ENCODE measurements at regions of chr15 and their contacts with region 1.

Region 1: GRCh38 chr15:60128000-60128376 is 123.9 kb downstream of the FOXB1 start:
- DNase-seq: peak in 1 of 2 experiments; percentile 63
- H3K4me3 ChIP-seq: peak overlapping the region; percentile 53
- H3K27ac ChIP-seq: peak overlapping the region; percentile 90
- H3K4me1 ChIP-seq: peaks cover 23% of the 10 kb centered on the region
- H3K27me3 ChIP-seq: no peaks in the 10 kb centered on the region
- CTCF ChIP-seq: no peak

Region 2: DNA sequence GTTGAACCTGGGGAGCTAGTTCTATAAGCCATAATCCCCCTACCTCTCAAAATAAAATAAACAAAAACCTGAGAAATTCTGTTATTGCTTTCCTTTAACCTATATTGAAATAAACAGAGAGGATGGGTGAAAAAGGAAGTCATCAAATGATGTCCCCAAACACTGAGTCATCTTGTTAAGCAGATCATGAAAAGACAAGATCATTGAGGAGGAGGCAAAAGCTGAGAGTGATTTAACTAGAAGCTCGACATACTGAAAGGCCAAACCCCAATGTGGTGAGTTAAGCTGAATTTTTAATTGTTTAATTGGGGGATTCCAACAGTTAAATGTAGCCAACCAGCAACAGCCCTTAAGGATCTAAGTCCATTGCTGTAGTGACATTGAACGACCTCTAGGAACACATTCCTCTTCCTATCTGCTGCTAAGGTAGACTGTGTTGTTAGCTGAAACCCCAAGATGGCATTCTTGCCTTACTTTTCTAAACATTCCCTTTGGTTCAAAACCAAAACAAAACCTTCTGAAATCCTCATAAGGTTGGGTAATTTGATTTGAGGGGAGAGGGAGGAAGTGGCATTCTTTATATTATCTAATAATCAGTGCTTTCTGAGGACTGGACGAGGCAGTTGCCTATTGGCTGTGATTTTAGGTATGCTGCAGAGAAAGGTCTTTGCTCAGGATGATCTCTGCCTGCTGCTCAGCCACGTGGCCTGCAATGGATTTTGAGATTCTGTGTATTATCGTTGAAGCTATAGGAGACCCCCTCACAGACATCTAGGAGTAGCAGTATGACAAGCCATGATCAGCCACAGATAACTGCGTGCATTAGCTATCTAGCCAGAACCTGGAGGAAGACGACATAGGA is 376.2 kb before region 1 on chr15:
- CTCF ChIA-PET with region 1: no interaction called
- POLR2A ChIA-PET with region 1: no interaction called
- intact Hi-C with region 1: loop called (anchors 1 kb)
- DNase-seq: peak; percentile 8 to 68
- H3K4me3 ChIP-seq: no peak overlapping the region
- H3K27ac ChIP-seq: no peak overlapping the region
- H3K4me1 ChIP-seq: no peaks in the 10 kb centered on the region
- H3K27me3 ChIP-seq: no peaks in the 10 kb centered on the region
- CTCF ChIP-seq: peak; percentile 62

Region 3: GRCh38 chr15:59917504-59918157 is 210.4 kb before region 1 on chr15:
- CTCF ChIA-PET with region 1: no interaction called
- POLR2A ChIA-PET with region 1: no interaction called
- intact Hi-C with region 1: loop called (anchors 1 kb)
- DNase-seq: peak; percentile 48 to 78
- H3K4me3 ChIP-seq: no peak overlapping the region
- H3K27ac ChIP-seq: no peak overlapping the region
- H3K4me1 ChIP-seq: peaks cover 19% of the 10 kb centered on the region
- H3K27me3 ChIP-seq: no peaks in the 10 kb centered on the region
- CTCF ChIP-seq: peak; percentile 65

Region 4: DNA sequence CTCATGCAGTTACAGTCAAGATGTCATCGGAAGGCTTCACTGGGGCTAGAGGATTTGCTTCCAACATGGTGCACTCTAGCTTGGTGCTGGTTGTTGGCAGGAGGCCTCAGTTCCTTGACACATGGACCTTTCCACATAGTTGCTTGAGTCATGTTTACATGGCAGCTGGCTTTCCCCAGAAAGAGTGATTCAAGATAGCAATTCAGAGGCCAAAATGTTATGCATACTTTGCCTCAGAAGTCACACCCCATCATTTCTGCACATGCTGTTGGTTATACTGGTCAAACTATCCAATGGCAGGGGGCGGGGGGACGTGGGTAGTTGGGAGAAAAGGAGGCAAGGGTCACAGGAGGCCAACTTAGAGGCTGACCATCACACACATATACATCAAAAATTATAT is 65.2 kb before region 1 on chr15:
- CTCF ChIA-PET with region 1: interaction called, 10 read pairs
- POLR2A ChIA-PET with region 1: no interaction called
- intact Hi-C with region 1: no loop called
- DNase-seq: no peak
- H3K4me3 ChIP-seq: no peak overlapping the region
- H3K27ac ChIP-seq: no peak overlapping the region
- H3K4me1 ChIP-seq: no peaks in the 10 kb centered on the region
- H3K27me3 ChIP-seq: no peaks in the 10 kb centered on the region
- CTCF ChIP-seq: no peak

Region 5: GRCh38 chr15:60091165-60091564 is 36.8 kb before region 1 on chr15:
- CTCF ChIA-PET with region 1: no interaction called
- POLR2A ChIA-PET with region 1: no interaction called
- intact Hi-C with region 1: loop called (anchors 1 kb)
- DNase-seq: peak; percentile 87 to 98
- H3K4me3 ChIP-seq: no peak overlapping the region
- H3K27ac ChIP-seq: peak overlapping the region; percentile 96
- H3K4me1 ChIP-seq: peaks cover 69% of the 10 kb centered on the region
- H3K27me3 ChIP-seq: no peaks in the 10 kb centered on the region
- CTCF ChIP-seq: no peak

Region 6: GRCh38 chr15:60237421-60237820 is 109.4 kb after region 1 on chr15:
- CTCF ChIA-PET with region 1: no interaction called
- POLR2A ChIA-PET with region 1: no interaction called
- intact Hi-C with region 1: no loop called
- DNase-seq: no peak
- H3K4me3 ChIP-seq: no peak overlapping the region
- H3K27ac ChIP-seq: no peak overlapping the region
- H3K4me1 ChIP-seq: no peaks in the 10 kb centered on the region
- H3K27me3 ChIP-seq: no peaks in the 10 kb centered on the region
- CTCF ChIP-seq: no peak

Region 7: GRCh38 chr15:60374628-60375081 is 246.7 kb after region 1 on chr15:
- CTCF ChIA-PET with region 1: no interaction called
- POLR2A ChIA-PET with region 1: no interaction called
- intact Hi-C with region 1: no loop called
- DNase-seq: peak; percentile 90 to 93
- H3K4me3 ChIP-seq: no peak overlapping the region
- H3K27ac ChIP-seq: peak overlapping the region; percentile 97
- H3K4me1 ChIP-seq: peaks cover 56% of the 10 kb centered on the region
- H3K27me3 ChIP-seq: no peaks in the 10 kb centered on the region
- CTCF ChIP-seq: no peak

Measured in PC-9 (cell line).